PC-9 (cell line): ENCODE measurements at regions of chr20 and their contacts with region 1.

Region 1: GRCh38 chr20:19349879-19350278 is 137.4 kb downstream of the SLC24A3 start:
- DNase-seq: no peak
- H3K4me3 ChIP-seq: no peak overlapping the region
- H3K27ac ChIP-seq: no peak overlapping the region
- H3K4me1 ChIP-seq: no peaks in the 10 kb centered on the region
- H3K27me3 ChIP-seq: 0 out of 2 replicates have a peak, but pooled peaks cover 20% of the 10 kb centered on the region
- CTCF ChIP-seq: no peak

Region 2: GRCh38 chr20:18929800-18930199 is 420.1 kb before region 1 on chr20:
- CTCF ChIA-PET with region 1: no interaction called
- POLR2A ChIA-PET with region 1: no interaction called
- intact Hi-C with region 1: no loop called
- DNase-seq: no peak
- H3K4me3 ChIP-seq: no peak overlapping the region
- H3K27ac ChIP-seq: no peak overlapping the region
- H3K4me1 ChIP-seq: no peaks in the 10 kb centered on the region
- H3K27me3 ChIP-seq: no peaks in the 10 kb centered on the region
- CTCF ChIP-seq: no peak

Region 3: GRCh38 chr20:19304389-19304788 is 45.5 kb before region 1 on chr20:
- CTCF ChIA-PET with region 1: no interaction called
- POLR2A ChIA-PET with region 1: interaction called, 10 read pairs
- intact Hi-C with region 1: no loop called
- DNase-seq: no peak
- H3K4me3 ChIP-seq: no peak overlapping the region
- H3K27ac ChIP-seq: no peak overlapping the region
- H3K4me1 ChIP-seq: no peaks in the 10 kb centered on the region
- H3K27me3 ChIP-seq: peaks cover 49% of the 10 kb centered on the region
- CTCF ChIP-seq: no peak